ENCODE measurements at regions of chr2 and their contacts with region 1.

Region 1: DNA sequence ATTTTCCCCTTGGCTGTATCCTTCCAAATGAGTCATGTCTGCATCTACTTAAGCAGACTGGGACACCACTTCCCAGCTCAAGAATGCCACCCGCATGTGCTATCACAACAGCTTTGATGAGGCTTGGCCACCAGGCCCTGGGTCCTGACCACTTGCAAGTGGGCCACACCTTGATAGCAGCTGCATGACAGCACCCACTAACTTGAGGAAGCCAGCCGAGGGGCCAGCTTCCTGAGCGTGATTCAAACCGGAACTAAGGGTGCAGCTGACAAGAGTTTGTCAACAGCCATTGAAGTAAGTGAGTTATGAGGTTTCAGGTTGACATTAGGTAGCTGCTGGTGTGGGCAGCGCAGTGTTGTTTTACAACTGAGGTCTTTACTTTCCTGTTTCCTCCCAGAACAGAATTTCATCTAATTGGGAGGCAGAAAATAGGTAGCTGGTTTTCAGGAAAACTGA is 54.4 kb downstream of the EPHA4 start:
- DNase-seq: peak; percentile 94 to 100
- H3K4me3 ChIP-seq: 0 out of 2 replicates have a peak overlapping the region, but pooled peaks have one; percentile 6
- H3K27ac ChIP-seq: peak overlapping the region; percentile 58
- H3K4me1 ChIP-seq: peaks cover 64% of the 10 kb centered on the region
- H3K27me3 ChIP-seq: no peaks in the 10 kb centered on the region
- CTCF ChIP-seq: no peak

Region 2: GRCh38 chr2:220708366-220708765 is 809.4 kb before region 1 on chr2:
- CTCF ChIA-PET with region 1: no interaction called
- POLR2A ChIA-PET with region 1: interaction called, 11 read pairs
- intact Hi-C with region 1: no loop called
- DNase-seq: no peak
- H3K4me3 ChIP-seq: no peak overlapping the region
- H3K27ac ChIP-seq: no peak overlapping the region
- H3K4me1 ChIP-seq: no peaks in the 10 kb centered on the region
- H3K27me3 ChIP-seq: no peaks in the 10 kb centered on the region
- CTCF ChIP-seq: no peak

Region 3: DNA sequence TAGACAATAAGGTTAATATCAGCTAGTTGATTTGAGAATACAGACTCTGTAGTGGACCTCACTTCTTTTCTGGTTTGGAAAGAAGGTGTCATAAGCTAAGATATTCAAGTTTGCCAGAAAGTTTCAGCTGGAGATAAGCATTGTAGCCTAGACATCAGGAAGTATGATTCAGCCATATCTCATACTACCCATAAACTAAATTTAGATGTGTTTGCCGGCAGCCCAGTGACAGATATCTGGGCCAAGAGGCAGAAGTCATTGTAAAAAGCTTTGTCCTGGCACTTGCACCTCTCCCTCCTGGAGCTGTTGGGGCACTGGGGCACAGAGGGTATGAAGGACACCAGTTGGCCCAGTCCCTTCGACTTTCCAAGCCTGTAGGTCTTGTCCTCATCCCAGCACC is 73.6 kb before region 1 on chr2:
- CTCF ChIA-PET with region 1: interaction called, 3 read pairs
- POLR2A ChIA-PET with region 1: no interaction called
- intact Hi-C with region 1: loop called (anchors 2 kb)
- DNase-seq: peak; percentile 65 to 97
- H3K4me3 ChIP-seq: peak overlapping the region; percentile 8; the same call in 1 of the 2 replicates
- H3K27ac ChIP-seq: peak overlapping the region; percentile 58
- H3K4me1 ChIP-seq: peaks cover 58% of the 10 kb centered on the region
- H3K27me3 ChIP-seq: no peaks in the 10 kb centered on the region
- CTCF ChIP-seq: no peak

Region 4: DNA sequence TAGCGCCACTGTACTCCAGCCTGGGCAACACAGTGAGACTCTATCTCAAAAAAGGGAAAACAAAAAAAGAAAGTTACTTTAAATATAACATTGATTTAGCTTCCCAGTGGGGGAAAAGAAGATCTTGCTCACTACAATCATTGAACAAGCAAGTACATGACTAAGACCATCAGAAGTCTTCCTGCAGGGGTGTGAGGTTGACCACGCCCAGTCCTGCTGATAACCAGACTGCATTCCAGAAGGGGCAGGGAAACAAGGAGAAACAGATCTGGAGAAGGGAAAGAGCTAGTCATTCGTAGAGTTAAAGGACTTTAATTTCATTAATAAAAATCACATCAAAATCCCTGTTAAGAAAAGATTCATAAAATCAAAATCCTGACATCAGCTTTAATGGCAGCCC is 23.2 kb before region 1 on chr2:
- CTCF ChIA-PET with region 1: interaction called, 10 read pairs
- POLR2A ChIA-PET with region 1: no interaction called
- intact Hi-C with region 1: no loop called
- DNase-seq: peak; percentile 60 to 68
- H3K4me3 ChIP-seq: no peak overlapping the region
- H3K27ac ChIP-seq: no peak overlapping the region
- H3K4me1 ChIP-seq: peaks cover 7% of the 10 kb centered on the region
- H3K27me3 ChIP-seq: no peaks in the 10 kb centered on the region
- CTCF ChIP-seq: no peak

Region 5: DNA sequence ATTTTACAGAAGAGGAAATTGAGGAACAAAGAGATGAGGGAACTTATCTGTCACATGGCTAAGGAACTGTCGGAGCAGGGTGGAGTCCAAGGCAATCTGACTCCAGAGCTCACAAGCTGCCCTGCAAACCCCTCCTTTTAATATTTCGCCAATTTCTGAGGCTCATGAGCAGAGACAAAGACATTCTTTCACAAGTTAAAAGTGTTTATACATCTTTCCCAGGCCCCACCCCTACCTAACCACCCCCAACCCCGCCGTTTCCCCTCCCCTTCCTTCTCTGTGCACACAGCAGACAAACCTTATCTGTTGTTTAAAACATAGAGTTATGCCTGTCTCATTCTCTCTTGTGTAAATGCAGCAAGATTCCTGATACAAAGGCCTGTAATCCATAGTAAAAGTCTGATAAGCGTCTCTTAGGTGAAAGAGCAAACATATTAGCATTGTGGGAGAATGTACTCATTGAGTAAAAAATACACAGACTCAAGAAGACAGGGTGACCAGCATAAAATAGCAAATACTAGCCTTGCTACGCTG is 10.1 kb after region 1 on chr2:
- CTCF ChIA-PET with region 1: no interaction called
- POLR2A ChIA-PET with region 1: no interaction called
- intact Hi-C with region 1: loop called (anchors 1 kb)
- DNase-seq: no peak
- H3K4me3 ChIP-seq: no peak overlapping the region
- H3K27ac ChIP-seq: no peak overlapping the region
- H3K4me1 ChIP-seq: peaks cover 2% of the 10 kb centered on the region
- H3K27me3 ChIP-seq: no peaks in the 10 kb centered on the region
- CTCF ChIP-seq: no peak

Region 6: DNA sequence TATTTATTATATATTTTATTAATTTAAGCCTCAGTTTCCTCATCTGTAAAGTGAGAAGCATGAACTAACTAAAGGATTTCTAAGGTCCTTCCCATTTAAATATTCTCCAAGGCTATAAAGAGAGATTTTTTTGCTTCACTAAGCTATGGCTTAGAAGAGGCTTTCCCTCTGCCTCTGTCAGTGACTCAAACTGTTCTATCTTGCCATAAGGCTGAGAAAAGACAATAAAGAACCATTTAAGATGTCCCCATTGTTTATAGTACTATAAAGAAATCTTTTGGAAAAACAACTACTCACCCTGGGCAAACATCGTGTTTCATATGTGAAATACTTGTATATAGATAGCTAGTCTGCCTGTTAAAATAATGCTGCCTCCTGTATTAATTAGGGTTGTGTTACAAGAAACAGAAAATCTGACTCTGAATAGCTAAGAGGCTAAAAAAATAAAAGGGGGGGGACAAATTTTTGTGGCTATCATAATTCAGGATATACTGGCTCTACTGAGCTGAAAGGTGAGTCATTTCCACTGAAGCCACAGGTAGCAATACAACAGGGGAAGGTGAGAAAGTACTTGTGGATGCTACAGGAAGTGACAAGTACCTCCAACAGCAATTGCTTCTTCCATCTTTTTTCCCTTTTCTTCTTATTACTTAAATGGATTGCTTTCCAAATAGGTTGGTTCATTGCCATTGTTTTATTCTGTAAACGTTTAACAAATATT is 28.9 kb after region 1 on chr2:
- CTCF ChIA-PET with region 1: no interaction called
- POLR2A ChIA-PET with region 1: no interaction called
- intact Hi-C with region 1: loop called (anchors 1 kb)
- DNase-seq: peak; percentile 46 to 97
- H3K4me3 ChIP-seq: no peak overlapping the region; the same call in 1 of the 2 replicates
- H3K27ac ChIP-seq: peak overlapping the region; percentile 74
- H3K4me1 ChIP-seq: peaks cover 25% of the 10 kb centered on the region
- H3K27me3 ChIP-seq: no peaks in the 10 kb centered on the region
- CTCF ChIP-seq: 0 out of 2 replicates have a peak, but pooled peaks have one; percentile 12

Region 7: GRCh38 chr2:221767106-221768012 is 249.6 kb after region 1 on chr2:
- CTCF ChIA-PET with region 1: no interaction called
- POLR2A ChIA-PET with region 1: interaction called, 10 read pairs
- intact Hi-C with region 1: no loop called
- DNase-seq: no peak
- H3K4me3 ChIP-seq: no peak overlapping the region
- H3K27ac ChIP-seq: no peak overlapping the region
- H3K4me1 ChIP-seq: peaks cover 9% of the 10 kb centered on the region; the same call in 1 of the 2 replicates
- H3K27me3 ChIP-seq: no peaks in the 10 kb centered on the region
- CTCF ChIP-seq: no peak

Region 8: GRCh38 chr2:221850059-221850458 is 332.3 kb after region 1 on chr2:
- CTCF ChIA-PET with region 1: no interaction called
- POLR2A ChIA-PET with region 1: no interaction called
- intact Hi-C with region 1: no loop called
- DNase-seq: peak; percentile 34 to 84
- H3K4me3 ChIP-seq: no peak overlapping the region
- H3K27ac ChIP-seq: no peak overlapping the region
- H3K4me1 ChIP-seq: peaks cover 48% of the 10 kb centered on the region
- H3K27me3 ChIP-seq: no peaks in the 10 kb centered on the region
- CTCF ChIP-seq: no peak

Measured in PC-9 (cell line).